IMR-90 (cell line): ENCODE measurements at regions of chr3 and their contacts with region 1.

Region 1: GRCh38 chr3:42229942-42230688 is 35.9 kb downstream of the CCK start:
- DNase-seq: peak; percentile 58
- ATAC-seq: peak; percentile 73
- H3K4me3 ChIP-seq: no peak overlapping the region
- H3K27ac ChIP-seq: no peak overlapping the region
- H3K4me1 ChIP-seq: peaks cover 2% of the 10 kb centered on the region; the same call in 1 of the 2 replicates
- H3K27me3 ChIP-seq: peaks cover 15% of the 10 kb centered on the region; the same call in 1 of the 2 replicates
- CTCF ChIP-seq: peak; percentile 69
- POLR2A ChIP-seq: no peak
- RAD21 ChIP-seq: peak; percentile 75

Region 2: GRCh38 chr3:41893977-41894376 is 336.1 kb before region 1 on chr3:
- CTCF ChIA-PET with region 1: no interaction called
- POLR2A ChIA-PET with region 1: no interaction called
- dilution Hi-C with region 1: no loop called
- in situ Hi-C with region 1: no loop called
- intact Hi-C with region 1: loop called (anchors 2 kb)
- DNase-seq: peak; percentile 62
- ATAC-seq: peak; percentile 68
- H3K4me3 ChIP-seq: no peak overlapping the region
- H3K27ac ChIP-seq: no peak overlapping the region
- H3K4me1 ChIP-seq: no peaks in the 10 kb centered on the region
- H3K27me3 ChIP-seq: no peaks in the 10 kb centered on the region
- CTCF ChIP-seq: peak; percentile 65
- POLR2A ChIP-seq: no peak
- RAD21 ChIP-seq: peak; percentile 77

Region 3: GRCh38 chr3:42118762-42119361 is 111.3 kb before region 1 on chr3:
- CTCF ChIA-PET with region 1: no interaction called
- POLR2A ChIA-PET with region 1: no interaction called
- dilution Hi-C with region 1: no loop called
- in situ Hi-C with region 1: no loop called
- intact Hi-C with region 1: loop called (anchors 5 kb)
- DNase-seq: peak; percentile 49
- ATAC-seq: peak; percentile 54; the same call in 1 of the 2 replicates
- H3K4me3 ChIP-seq: no peak overlapping the region
- H3K27ac ChIP-seq: no peak overlapping the region
- H3K4me1 ChIP-seq: peaks cover 11% of the 10 kb centered on the region
- H3K27me3 ChIP-seq: no peaks in the 10 kb centered on the region
- CTCF ChIP-seq: peak; percentile 37
- POLR2A ChIP-seq: no peak
- RAD21 ChIP-seq: peak; percentile 54

Region 4: DNA sequence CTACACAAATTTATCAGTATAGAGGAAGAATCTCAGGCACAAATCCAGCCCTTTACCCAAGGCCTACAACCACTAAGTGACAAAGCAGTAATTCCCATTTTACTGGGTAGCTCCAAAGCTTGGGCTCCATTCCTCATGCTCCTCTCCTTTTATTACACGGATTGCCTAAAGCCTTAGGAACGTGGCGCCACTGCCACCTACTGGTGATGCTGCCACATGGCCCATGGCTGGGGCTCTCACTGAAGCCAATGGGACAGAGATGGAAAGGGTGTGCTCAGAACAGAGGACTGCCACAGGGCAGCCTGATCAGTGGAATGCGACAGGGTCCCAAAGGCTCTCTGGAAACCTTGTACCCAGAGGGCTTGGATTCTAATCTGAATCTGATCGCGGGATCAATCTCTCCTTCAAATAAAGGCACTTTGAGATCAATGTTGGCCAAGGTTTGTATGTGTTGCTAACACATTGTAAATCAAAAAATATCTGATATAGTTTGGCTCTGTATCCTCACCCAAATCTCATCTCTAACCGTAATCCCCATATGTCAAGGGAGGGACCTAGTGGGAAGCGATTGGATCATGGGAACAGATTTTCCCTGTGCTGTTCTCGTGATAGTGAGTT is 213.8 kb after region 1 on chr3:
- CTCF ChIA-PET with region 1: interaction called, 13 read pairs
- POLR2A ChIA-PET with region 1: no interaction called
- dilution Hi-C with region 1: no loop called
- in situ Hi-C with region 1: loop called (anchors 10 kb)
- intact Hi-C with region 1: loop called (anchors 1 kb)
- DNase-seq: peak; percentile 59
- ATAC-seq: peak; percentile 100
- H3K4me3 ChIP-seq: no peak overlapping the region
- H3K27ac ChIP-seq: no peak overlapping the region
- H3K4me1 ChIP-seq: no peaks in the 10 kb centered on the region
- H3K27me3 ChIP-seq: peaks cover 11% of the 10 kb centered on the region
- CTCF ChIP-seq: peak; percentile 95
- POLR2A ChIP-seq: no peak
- RAD21 ChIP-seq: peak; percentile 92

Region 5: DNA sequence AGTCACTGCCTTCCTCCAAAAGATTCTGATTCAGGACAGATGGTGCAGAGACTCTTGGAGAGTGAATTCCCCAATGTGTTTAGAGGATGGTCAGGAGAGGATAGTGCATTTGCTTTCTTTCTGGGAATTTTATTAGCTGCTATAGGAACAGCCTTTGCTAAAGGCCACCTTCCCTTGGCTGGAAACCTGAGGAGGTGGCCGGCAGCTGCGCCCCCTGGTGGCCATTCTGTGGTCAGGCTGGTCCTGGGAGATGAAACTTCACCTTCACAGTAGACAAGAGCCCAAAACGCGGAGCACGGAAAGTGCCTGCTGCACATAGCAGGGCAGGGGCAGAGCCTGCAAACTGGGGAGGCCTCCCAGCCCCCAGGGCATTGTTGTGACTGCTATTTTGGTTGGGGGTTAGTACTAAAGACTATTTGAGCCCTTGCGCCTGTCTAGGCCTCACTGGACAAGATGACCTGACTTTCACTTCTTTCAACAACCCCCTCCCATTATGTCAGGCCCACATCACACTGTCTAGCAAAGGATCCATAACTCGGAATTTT is 317.4 kb after region 1 on chr3:
- CTCF ChIA-PET with region 1: no interaction called
- POLR2A ChIA-PET with region 1: no interaction called
- dilution Hi-C with region 1: no loop called
- in situ Hi-C with region 1: loop called (anchors 10 kb)
- intact Hi-C with region 1: loop called (anchors 1 kb)
- DNase-seq: peak; percentile 44
- ATAC-seq: peak; percentile 81
- H3K4me3 ChIP-seq: no peak overlapping the region
- H3K27ac ChIP-seq: no peak overlapping the region
- H3K4me1 ChIP-seq: no peaks in the 10 kb centered on the region; the same call in 1 of the 2 replicates
- H3K27me3 ChIP-seq: no peaks in the 10 kb centered on the region
- CTCF ChIP-seq: peak; percentile 74
- POLR2A ChIP-seq: no peak
- RAD21 ChIP-seq: peak; percentile 45

Region 6: GRCh38 chr3:42880601-42881451 is 650.7 kb after region 1 on chr3:
- CTCF ChIA-PET with region 1: no interaction called
- POLR2A ChIA-PET with region 1: no interaction called
- dilution Hi-C with region 1: no loop called
- in situ Hi-C with region 1: no loop called
- intact Hi-C with region 1: loop called (anchors 1 kb)
- DNase-seq: peak; percentile 61
- ATAC-seq: peak; percentile 99
- H3K4me3 ChIP-seq: peak overlapping the region; percentile 48
- H3K27ac ChIP-seq: no peak overlapping the region; the same call in 1 of the 2 replicates
- H3K4me1 ChIP-seq: no peaks in the 10 kb centered on the region
- H3K27me3 ChIP-seq: peaks cover 13% of the 10 kb centered on the region
- CTCF ChIP-seq: peak; percentile 81
- POLR2A ChIP-seq: 0 out of 2 replicates have a peak, but pooled peaks have one; percentile 28
- RAD21 ChIP-seq: peak; percentile 80